ENCODE measurements at regions of chr15 and their contacts with region 1.

Region 1: GRCh38 chr15:43185157-43186017 is at the start of gene CCNDBP1:
- DNase-seq: peak; percentile 69 to 90 (median 79)
- ATAC-seq: peak; percentile 91
- H3K4me3 ChIP-seq: peak within 1 kb of the TSS; percentile 91
- H3K4me3 Mint-ChIP-seq: peak within 1 kb of the TSS; percentile 90 to 98 (median 96)
- H3K27ac ChIP-seq: peak within 1 kb of the TSS; percentile 95
- H3K27ac Mint-ChIP-seq: peak within 1 kb of the TSS; percentile 95 to 99 (median 98)
- H3K4me1 ChIP-seq: peaks cover 16 to 22% of the 10 kb centered on the region in 2 donors
- H3K4me1 Mint-ChIP-seq: peaks cover 19 to 54% (median 35%) of the 10 kb centered on the region in 7 donors
- H3K27me3 ChIP-seq: no peaks in the 10 kb centered on the region
- H3K27me3 Mint-ChIP-seq: no peaks in the 10 kb centered on the region
- total RNA-seq, gene CCNDBP1: 72.3 to 110 (median 100) TPM

Region 2: DNA sequence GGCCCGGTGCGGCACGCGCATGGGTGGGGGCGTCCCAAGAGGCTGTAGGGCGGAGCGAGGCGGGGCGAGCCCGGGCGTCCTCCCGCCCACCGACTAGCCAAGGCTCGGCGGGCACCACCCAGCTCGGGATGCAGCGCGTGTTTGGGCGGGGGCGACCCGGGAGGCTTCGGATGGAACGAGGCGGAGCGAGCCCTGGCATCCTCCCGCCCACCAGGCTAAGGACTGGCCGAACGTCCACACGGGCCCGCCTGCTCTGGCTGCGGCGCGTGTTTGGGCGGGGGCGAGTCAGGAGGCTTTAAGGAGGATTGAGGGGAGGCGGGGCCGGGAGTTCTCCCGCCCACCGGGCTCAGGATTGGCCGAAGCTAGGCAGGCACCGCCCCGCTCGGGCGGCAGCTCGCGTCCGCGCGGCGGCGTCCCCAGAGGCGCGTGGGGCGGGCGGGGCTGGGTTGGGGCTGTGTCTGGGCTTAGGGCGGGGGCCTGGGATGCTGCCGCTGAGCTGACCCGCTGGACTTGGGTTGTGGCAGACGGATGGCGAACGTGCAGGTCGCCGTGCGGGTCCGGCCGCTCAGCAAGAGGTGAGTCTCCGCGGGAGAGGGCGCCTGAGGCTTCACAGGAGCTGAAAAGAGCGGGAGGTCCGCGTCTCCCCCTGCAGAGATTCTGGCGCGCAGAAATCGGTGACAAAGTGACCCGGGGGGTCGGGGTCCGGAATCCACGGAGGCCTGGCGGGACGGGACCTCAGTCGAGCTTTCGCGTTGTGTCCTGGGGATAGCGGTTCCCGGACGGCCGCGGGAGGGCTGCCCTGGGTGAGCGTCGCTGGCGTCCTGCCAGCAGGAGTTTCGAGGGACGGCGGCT is 610.0 kb before region 1 on chr15 and contains the start of gene STARD9:
- CTCF ChIA-PET with region 1: no interaction called
- POLR2A ChIA-PET with region 1: no interaction called
- intact Hi-C with region 1: loop called in 1 of 2 experiments (anchors 5 kb)
- DNase-seq: peak; percentile 84 to 96 (median 93)
- ATAC-seq: peak; percentile 96
- H3K4me3 ChIP-seq: peak within 1 kb of the TSS; percentile 81
- H3K4me3 Mint-ChIP-seq: peak within 1 kb of the TSS; percentile 74 to 95 (median 92)
- H3K27ac ChIP-seq: peak within 1 kb of the TSS; percentile 58
- H3K27ac Mint-ChIP-seq: peak within 1 kb of the TSS; percentile 10 to 84 (median 76)
- H3K4me1 ChIP-seq: peaks cover 7 to 12% of the 10 kb centered on the region in 2 donors
- H3K4me1 Mint-ChIP-seq: peaks cover 14 to 36% (median 19%) of the 10 kb centered on the region in 7 donors
- H3K27me3 ChIP-seq: no peaks in the 10 kb centered on the region
- H3K27me3 Mint-ChIP-seq: peaks cover 6 to 35% (median 13%) of the 10 kb centered on the region in 5 donors
- total RNA-seq, gene STARD9: 2.4 to 10.5 (median 4.5) TPM

Region 3: DNA sequence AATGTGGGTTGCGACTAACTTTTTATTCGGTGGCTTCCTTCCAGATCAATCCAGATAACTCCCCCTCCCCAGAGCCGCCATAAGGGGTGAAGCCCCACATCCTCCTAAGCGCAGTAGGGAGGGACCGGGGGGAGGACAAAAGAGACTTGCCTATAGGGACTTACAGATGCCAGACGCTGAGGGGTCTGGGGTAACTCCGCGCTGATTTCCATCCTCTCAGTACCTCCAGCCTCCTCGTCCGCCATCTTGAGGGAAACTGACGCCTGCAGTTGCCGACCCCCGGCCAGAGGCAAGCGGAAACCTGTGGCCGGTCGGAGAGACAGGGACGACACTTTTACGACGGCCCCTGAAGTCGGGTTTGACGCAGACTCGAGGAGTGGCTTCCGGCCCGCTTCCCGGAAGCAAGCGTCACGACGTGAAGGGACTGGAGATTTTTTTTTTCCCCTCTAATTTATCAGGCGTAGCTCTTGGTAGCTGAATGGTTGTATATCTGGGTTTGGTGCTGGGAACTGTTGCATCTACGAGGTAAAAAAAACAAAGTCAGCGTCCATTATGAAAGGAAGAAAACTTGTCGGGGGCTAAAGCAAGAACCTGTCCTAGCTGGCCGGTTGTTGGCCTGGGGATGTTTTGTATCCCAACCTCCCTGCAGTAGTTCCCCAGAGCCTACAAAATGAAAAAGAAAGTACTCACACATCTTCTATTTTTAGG is 79.5 kb before region 1 on chr15 and contains the start of gene UBR1:
- CTCF ChIA-PET with region 1: interaction called, 3 read pairs
- POLR2A ChIA-PET with region 1: interaction called, 12 read pairs
- intact Hi-C with region 1: loop called (anchors 1 to 2 kb)
- DNase-seq: peak; percentile 65 to 91 (median 89)
- ATAC-seq: peak; percentile 94
- H3K4me3 ChIP-seq: peak within 1 kb of the TSS; percentile 86
- H3K4me3 Mint-ChIP-seq: peak within 1 kb of the TSS; percentile 86 to 99 (median 95)
- H3K27ac ChIP-seq: peak within 1 kb of the TSS; percentile 99
- H3K27ac Mint-ChIP-seq: peak within 1 kb of the TSS; percentile 97 to 99 (median 98)
- H3K4me1 ChIP-seq: peaks cover 21 to 24% of the 10 kb centered on the region in 2 donors
- H3K4me1 Mint-ChIP-seq: peaks cover 40 to 56% (median 52%) of the 10 kb centered on the region in 7 donors
- H3K27me3 ChIP-seq: no peaks in the 10 kb centered on the region
- H3K27me3 Mint-ChIP-seq: peaks cover 0 to 5% (median 0%) of the 10 kb centered on the region in 5 donors
- total RNA-seq, gene UBR1: 38.4 to 51.7 (median 48.0) TPM

Region 4: GRCh38 chr15:43150191-43150929 is 35.0 kb before region 1 on chr15:
- CTCF ChIA-PET with region 1: no interaction called
- POLR2A ChIA-PET with region 1: interaction called, 3 read pairs
- intact Hi-C with region 1: loop called in 1 of 2 experiments (anchors 5 kb)
- DNase-seq: no peak
- ATAC-seq: no peak
- H3K4me3 ChIP-seq: no peak overlapping the region
- H3K4me3 Mint-ChIP-seq: no peak overlapping the region
- H3K27ac ChIP-seq: no peak overlapping the region
- H3K27ac Mint-ChIP-seq: no peak overlapping the region
- H3K4me1 ChIP-seq: peaks cover 4 to 5% of the 10 kb centered on the region in 2 donors
- H3K4me1 Mint-ChIP-seq: peaks cover 5 to 21% (median 14%) of the 10 kb centered on the region in 7 donors
- H3K27me3 ChIP-seq: no peaks in the 10 kb centered on the region
- H3K27me3 Mint-ChIP-seq: no peaks in the 10 kb centered on the region

Region 5: GRCh38 chr15:43285609-43286037 is 100.2 kb after region 1 on chr15:
- CTCF ChIA-PET with region 1: interaction called, 3 read pairs
- POLR2A ChIA-PET with region 1: interaction called, 3 read pairs
- intact Hi-C with region 1: loop called in 1 of 2 experiments (anchors 1 kb)
- DNase-seq: peak in 7 of 9 donors; percentile 32 to 68 (median 61)
- ATAC-seq: peak; percentile 88
- H3K4me3 ChIP-seq: no peak overlapping the region
- H3K4me3 Mint-ChIP-seq: no peak overlapping the region
- H3K27ac ChIP-seq: no peak overlapping the region
- H3K27ac Mint-ChIP-seq: peak overlapping the region in 1 of 9 donors; percentile 25
- H3K4me1 ChIP-seq: no peaks in the 10 kb centered on the region
- H3K4me1 Mint-ChIP-seq: peaks cover 0 to 9% (median 4%) of the 10 kb centered on the region in 7 donors
- H3K27me3 ChIP-seq: no peaks in the 10 kb centered on the region
- H3K27me3 Mint-ChIP-seq: peaks cover 0 to 11% (median 5%) of the 10 kb centered on the region in 5 donors

Region 6: GRCh38 chr15:43723151-43723550 is 537.8 kb after region 1 on chr15:
- CTCF ChIA-PET with region 1: no interaction called
- POLR2A ChIA-PET with region 1: no interaction called
- intact Hi-C with region 1: no loop called
- DNase-seq: no peak
- ATAC-seq: no peak
- H3K4me3 ChIP-seq: no peak overlapping the region
- H3K4me3 Mint-ChIP-seq: no peak overlapping the region
- H3K27ac ChIP-seq: no peak overlapping the region
- H3K27ac Mint-ChIP-seq: no peak overlapping the region
- H3K4me1 ChIP-seq: no peaks in the 10 kb centered on the region
- H3K4me1 Mint-ChIP-seq: no peaks in the 10 kb centered on the region
- H3K27me3 ChIP-seq: no peaks in the 10 kb centered on the region
- H3K27me3 Mint-ChIP-seq: peaks cover 3 to 17% (median 5%) of the 10 kb centered on the region in 5 donors

Region 7: GRCh38 chr15:44426975-44427755 is 1241.8 kb after region 1 on chr15 and contains the start of gene CTDSPL2:
- CTCF ChIA-PET with region 1: no interaction called
- POLR2A ChIA-PET with region 1: no interaction called
- intact Hi-C with region 1: loop called in 1 of 2 experiments (anchors 2 kb)
- DNase-seq: peak; percentile 87 to 98 (median 94)
- ATAC-seq: peak; percentile 98
- H3K4me3 ChIP-seq: peak within 1 kb of the TSS; percentile 94
- H3K4me3 Mint-ChIP-seq: peak within 1 kb of the TSS; percentile 95 to 99 (median 98)
- H3K27ac ChIP-seq: peak within 1 kb of the TSS; percentile 94
- H3K27ac Mint-ChIP-seq: peak within 1 kb of the TSS; percentile 98 to 100 (median 99)
- H3K4me1 ChIP-seq: peaks cover 10% of the 10 kb centered on the region in 2 donors
- H3K4me1 Mint-ChIP-seq: peaks cover 35 to 65% (median 51%) of the 10 kb centered on the region in 7 donors
- H3K27me3 ChIP-seq: no peaks in the 10 kb centered on the region
- H3K27me3 Mint-ChIP-seq: peaks cover 0 to 2% (median 0%) of the 10 kb centered on the region in 5 donors
- total RNA-seq, gene CTDSPL2: 60.3 to 81.8 (median 77.3) TPM